Ascending aorta (tissue), 2 donors: ENCODE measurements at regions of chr6 and their contacts with region 1.

Region 1: DNA sequence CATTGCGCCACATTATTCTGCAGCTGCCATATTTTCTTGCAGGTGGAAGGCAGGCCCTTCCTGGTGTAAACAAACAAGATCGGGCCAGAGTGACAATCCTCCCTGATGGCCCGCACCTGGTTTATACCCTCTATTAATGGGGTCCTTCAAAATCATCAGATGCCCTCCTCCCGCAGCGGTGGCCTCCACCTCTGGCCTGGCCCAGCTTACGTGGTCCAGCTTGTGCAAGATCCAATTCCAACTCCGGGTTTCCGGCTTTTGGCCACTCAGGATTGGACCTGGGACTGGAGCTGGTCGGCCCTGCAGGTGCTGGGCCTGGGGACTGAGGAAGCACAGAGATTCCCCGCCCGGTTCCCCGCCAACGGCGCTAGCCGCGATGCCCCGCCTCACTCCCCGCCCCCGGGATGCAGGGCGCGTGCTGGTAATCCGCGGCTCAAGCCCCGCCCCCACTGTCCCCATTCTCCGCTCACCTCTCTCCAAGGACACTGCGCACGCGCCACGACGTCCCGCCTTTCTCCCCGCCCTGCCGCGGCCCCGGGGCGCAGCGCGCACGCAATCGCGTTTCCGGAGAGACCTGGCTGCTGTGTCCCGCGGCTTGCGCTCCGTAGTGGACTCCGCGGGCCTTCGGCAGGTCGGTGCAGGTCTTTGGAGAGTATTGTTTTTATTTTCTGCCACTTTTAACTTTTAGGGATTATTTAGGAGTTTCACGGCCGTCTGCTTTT is at the start of gene TMEM14B:
- DNase-seq: peak; percentile 95 to 100
- H3K4me3 ChIP-seq: peak within 1 kb of the TSS; percentile 87 to 88
- H3K27ac ChIP-seq: peak within 1 kb of the TSS; percentile 77 to 78
- H3K4me1 ChIP-seq: peaks cover 14 to 20% of the 10 kb centered on the region in 2 donors
- H3K27me3 ChIP-seq: no peaks in the 10 kb centered on the region
- CTCF ChIP-seq: no peak
- total RNA-seq, gene TMEM14B: 59.1 TPM

Region 2: GRCh38 chr6:10404107-10404798 is 343.2 kb before region 1 on chr6:
- intact Hi-C with region 1: loop called (anchors 10 kb)
- DNase-seq: peak in 1 of 2 donors; percentile 88
- H3K4me3 ChIP-seq: peak overlapping the region; percentile 65 to 70
- H3K27ac ChIP-seq: peak overlapping the region in 1 of 2 donors; percentile 11
- H3K4me1 ChIP-seq: peaks cover 0 to 10% of the 10 kb centered on the region in 2 donors
- H3K27me3 ChIP-seq: peaks cover under 1% of the 10 kb centered on the region
- CTCF ChIP-seq: peak in 2 of 3 experiments; percentile 14 to 44

Region 3: GRCh38 chr6:10722820-10723566 is 24.4 kb before region 1 on chr6 and contains the start of gene TMEM14C:
- intact Hi-C with region 1: loop called (anchors 1 kb)
- DNase-seq: peak; percentile 95 to 100
- H3K4me3 ChIP-seq: peak within 1 kb of the TSS; percentile 66 to 91
- H3K27ac ChIP-seq: peak within 1 kb of the TSS; percentile 82 to 92
- H3K4me1 ChIP-seq: peaks cover 7 to 20% of the 10 kb centered on the region in 2 donors
- H3K27me3 ChIP-seq: no peaks in the 10 kb centered on the region
- CTCF ChIP-seq: no peak
- total RNA-seq, gene TMEM14C: 79.6 TPM